ENCODE measurements at regions of chr18 and their contacts with region 1.

Region 1: GRCh38 chr18:35513181-35513936 is 15.6 kb upstream of the INO80C start:
- DNase-seq: no peak
- ATAC-seq: no peak
- H3K4me3 Mint-ChIP-seq: no peak overlapping the region
- H3K27ac Mint-ChIP-seq: no peak overlapping the region
- H3K4me1 Mint-ChIP-seq: peaks cover 13% of the 10 kb centered on the region
- H3K27me3 Mint-ChIP-seq: no peaks in the 10 kb centered on the region
- CTCF ChIP-seq: no peak

Region 2: GRCh38 chr18:35467624-35468016 is 45.7 kb before region 1 on chr18:
- CTCF ChIA-PET with region 1: no interaction called
- POLR2A ChIA-PET with region 1: no interaction called
- intact Hi-C with region 1: loop called (anchors 5 kb)
- DNase-seq: peak; percentile 25
- ATAC-seq: peak; percentile 89
- H3K4me3 Mint-ChIP-seq: peak overlapping the region; percentile 28
- H3K27ac Mint-ChIP-seq: peak overlapping the region; percentile 31
- H3K4me1 Mint-ChIP-seq: peaks cover 32% of the 10 kb centered on the region
- H3K27me3 Mint-ChIP-seq: no peaks in the 10 kb centered on the region
- CTCF ChIP-seq: no peak

Region 3: DNA sequence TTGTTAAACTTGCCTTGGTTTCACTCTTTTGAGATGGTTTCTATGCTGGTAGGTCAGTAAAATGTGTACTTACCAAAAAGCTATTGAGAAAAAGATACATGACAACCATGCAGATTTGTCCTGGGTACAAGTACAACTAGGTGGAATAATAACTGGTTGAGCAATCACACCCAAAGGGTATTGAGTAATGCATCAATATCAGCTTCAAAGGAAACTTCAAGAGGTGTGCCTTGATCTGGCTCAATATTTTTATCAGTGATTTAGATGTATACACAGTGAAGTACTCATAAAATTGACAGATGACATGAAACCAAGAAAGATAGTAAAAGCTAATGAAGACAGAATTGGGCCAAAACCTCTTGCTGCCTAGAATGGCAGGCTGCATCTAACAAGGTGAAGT is 46.5 kb after region 1 on chr18:
- CTCF ChIA-PET with region 1: no interaction called
- POLR2A ChIA-PET with region 1: no interaction called
- intact Hi-C with region 1: loop called (anchors 5 kb)
- DNase-seq: no peak
- ATAC-seq: no peak
- H3K4me3 Mint-ChIP-seq: no peak overlapping the region
- H3K27ac Mint-ChIP-seq: no peak overlapping the region
- H3K4me1 Mint-ChIP-seq: peaks cover 14% of the 10 kb centered on the region
- H3K27me3 Mint-ChIP-seq: peaks cover 3% of the 10 kb centered on the region
- CTCF ChIP-seq: no peak

Region 4: DNA sequence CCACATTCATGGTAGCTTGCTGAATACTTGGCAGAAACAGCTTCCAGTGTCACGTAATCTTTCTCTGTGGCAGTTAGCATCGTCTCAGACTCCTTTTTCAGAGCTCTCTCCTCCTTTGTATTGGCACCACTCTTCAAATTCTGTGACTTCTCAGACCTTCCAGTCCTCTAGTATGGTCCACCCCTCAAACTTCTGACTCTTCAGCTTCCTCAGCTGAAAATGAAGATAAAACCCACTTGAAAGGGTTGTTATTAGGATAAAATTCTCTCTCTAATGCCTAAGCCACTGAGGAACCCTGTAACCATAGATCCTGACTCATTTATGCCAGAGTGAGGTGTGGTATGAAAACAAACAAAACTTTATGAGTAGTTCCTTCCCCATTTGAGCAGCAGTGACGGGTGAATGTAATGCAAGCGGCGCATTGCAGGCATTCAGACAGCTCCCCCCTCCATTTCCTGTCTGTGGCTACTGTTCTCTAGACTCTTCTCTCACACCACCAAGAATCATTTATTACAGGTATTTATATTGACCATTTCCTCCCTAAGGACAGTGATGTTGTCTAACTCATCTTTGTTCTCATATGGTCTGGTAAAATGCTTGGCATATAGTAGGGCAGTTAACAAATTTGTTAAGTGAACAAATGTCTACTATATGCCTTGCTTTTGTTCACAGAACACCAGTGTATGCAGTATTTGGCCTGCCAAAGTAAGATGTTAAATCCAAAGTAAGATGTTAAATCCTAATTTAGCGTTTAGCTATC is 103.5 kb after region 1 on chr18:
- CTCF ChIA-PET with region 1: no interaction called
- POLR2A ChIA-PET with region 1: no interaction called
- intact Hi-C with region 1: loop called (anchors 5 kb)
- DNase-seq: peak; percentile 24
- ATAC-seq: peak; percentile 93
- H3K4me3 Mint-ChIP-seq: no peak overlapping the region
- H3K27ac Mint-ChIP-seq: no peak overlapping the region
- H3K4me1 Mint-ChIP-seq: peaks cover 12% of the 10 kb centered on the region
- H3K27me3 Mint-ChIP-seq: no peaks in the 10 kb centered on the region
- CTCF ChIP-seq: no peak

Measured in activated B cell treated with CpG ODN at 0.5 μM for 24 hours (primary cell).